ENCODE measurements at regions of chr10 and their contacts with region 1.

Region 1: DNA sequence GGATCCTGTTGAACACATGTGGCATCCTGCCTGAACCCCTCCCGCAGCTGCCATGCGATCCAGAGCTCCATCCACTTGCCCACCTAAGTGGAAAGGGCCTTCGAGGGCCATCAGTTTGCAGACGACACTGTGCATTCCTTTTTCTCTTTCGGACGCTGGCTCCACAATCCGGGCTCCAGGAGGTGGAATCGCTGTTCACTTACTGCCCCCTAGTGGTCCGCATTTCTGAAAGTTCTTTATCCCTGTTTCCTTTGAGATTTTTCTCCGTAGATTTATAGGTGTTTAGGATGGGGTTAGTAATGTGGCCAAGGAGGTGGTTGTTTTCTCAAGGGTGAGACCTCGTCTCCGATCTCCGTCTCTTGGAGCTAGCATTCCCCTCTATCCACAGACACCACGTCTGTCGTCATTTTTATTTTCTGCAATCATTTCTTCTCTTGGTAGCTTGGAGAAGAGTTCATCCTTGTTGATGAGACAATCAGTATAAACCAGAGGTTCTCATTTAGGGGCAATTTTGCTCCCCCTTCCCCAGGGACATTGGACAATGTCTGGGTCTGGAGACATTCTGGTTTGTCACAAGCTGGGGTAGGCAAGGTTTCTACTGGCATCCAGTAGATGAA is 204.6 kb downstream of the ARHGAP21 start:
- DNase-seq: no peak

Region 2: GRCh38 chr10:22810643-22811465 is 1708.2 kb before region 1 on chr10:
- intact Hi-C with region 1: loop called in 1 of 2 experiments (anchors 5 kb)
- DNase-seq: no peak

Region 3: DNA sequence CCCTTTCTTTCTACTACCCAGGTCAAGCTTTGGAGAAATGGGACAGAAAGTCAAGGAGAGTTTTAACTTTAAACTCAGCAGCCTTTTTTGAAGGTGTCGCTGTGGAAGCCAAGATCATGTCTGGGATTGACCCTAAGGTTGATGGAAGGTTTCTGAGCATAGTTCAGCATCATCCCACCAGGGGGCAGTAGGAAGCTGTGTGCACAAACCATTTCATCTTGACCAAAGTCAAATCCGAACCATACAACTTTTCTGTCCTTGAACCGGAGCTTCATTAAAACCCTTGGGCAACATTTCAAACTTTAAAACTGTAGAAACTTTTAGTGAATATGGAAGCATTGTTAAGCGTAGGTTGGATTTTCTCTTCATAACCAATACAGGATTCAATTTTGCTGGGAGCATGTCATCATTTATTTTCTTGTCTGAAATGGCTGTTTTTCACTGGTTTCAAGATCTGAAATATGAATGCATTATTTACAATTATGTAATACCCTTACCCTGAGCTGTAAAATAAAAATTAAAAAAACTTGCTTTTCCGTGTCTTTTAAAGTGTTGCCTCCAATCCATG is 524.5 kb before region 1 on chr10:
- intact Hi-C with region 1: loop called in 1 of 2 experiments (anchors 10 kb)
- DNase-seq: no peak

Region 4: DNA sequence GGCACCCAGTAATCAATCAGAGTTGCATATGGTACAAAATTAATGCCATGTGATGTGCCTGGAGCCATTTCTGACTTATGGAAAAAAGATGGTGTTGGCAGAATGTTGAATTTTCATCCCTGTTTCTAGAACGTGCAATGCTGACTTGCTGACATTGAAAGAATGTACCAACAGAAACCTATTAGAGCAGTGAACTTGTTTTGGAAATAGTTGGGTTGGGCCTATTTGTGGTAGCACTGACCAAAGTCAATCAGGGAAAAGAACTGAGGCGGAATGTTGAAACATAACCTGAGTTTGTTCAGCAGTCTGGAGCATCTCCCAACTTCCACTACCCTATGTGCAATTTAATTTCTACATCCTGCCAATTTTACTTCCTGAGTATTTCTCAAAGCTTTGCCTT is 321.8 kb before region 1 on chr10:
- intact Hi-C with region 1: loop called (anchors 10 kb)
- DNase-seq: no peak

Region 5: GRCh38 chr10:24209946-24210491 is 309.1 kb before region 1 on chr10:
- intact Hi-C with region 1: loop called in 1 of 2 experiments (anchors 10 kb)
- DNase-seq: no peak

Region 6: GRCh38 chr10:24406809-24407483 is 112.1 kb before region 1 on chr10:
- intact Hi-C with region 1: no loop called
- DNase-seq: no peak

Region 7: GRCh38 chr10:24589265-24589664 is 70.2 kb after region 1 on chr10:
- intact Hi-C with region 1: loop called in 1 of 2 experiments (anchors 2 kb)
- DNase-seq: no peak

Measured in posterior vena cava (tissue), 2 donors.